ENCODE measurements at regions of chr7 and their contacts with region 1.

Region 1: GRCh38 chr7:116953727-116954442 is 584 bp downstream of the ST7 start:
- DNase-seq: peak; percentile 61
- H3K4me3 ChIP-seq: peak overlapping the region; percentile 71 to 99 (median 95)
- H3K27ac ChIP-seq: peak overlapping the region; percentile 99 to 100 (median 100)
- H3K4me1 ChIP-seq: peaks cover 5 to 34% (median 22%) of the 10 kb centered on the region in 4 donors
- H3K27me3 ChIP-seq: no peaks in the 10 kb centered on the region
- CTCF ChIP-seq: no peak
- EP300 ChIP-seq: no peak
- POLR2A ChIP-seq: peak; percentile 48

Region 2: DNA sequence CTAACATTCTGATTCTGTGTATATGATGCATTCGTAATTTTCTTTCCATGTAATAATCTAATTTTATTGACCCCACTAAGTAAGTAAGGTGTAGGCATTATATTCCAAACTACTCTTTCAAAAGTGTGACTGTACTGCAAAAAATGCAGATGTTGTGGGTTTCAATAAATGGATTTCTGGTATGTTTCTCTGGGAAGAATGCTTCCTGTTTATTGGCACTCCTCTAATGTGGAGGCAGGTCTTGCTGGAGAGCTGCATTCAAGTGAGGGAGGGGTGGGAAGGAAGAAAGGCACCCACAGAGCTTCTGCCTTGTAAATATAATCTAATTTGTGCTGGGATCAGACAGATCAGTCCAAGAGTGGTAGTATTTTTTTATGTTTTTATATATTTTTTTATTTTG is 23.3 kb after region 1 on chr7:
- in situ Hi-C with region 1: no loop called
- intact Hi-C with region 1: no loop called
- DNase-seq: no peak
- H3K4me3 ChIP-seq: no peak overlapping the region
- H3K27ac ChIP-seq: no peak overlapping the region
- H3K4me1 ChIP-seq: peaks cover 0 to 5% (median 0%) of the 10 kb centered on the region in 4 donors
- H3K27me3 ChIP-seq: no peaks in the 10 kb centered on the region
- CTCF ChIP-seq: no peak
- EP300 ChIP-seq: no peak
- POLR2A ChIP-seq: no peak

Region 3: GRCh38 chr7:118183786-118184564 is 1230.1 kb after region 1 on chr7 and contains the start of gene LSM8:
- in situ Hi-C with region 1: loop called in 1 of 4 experiments (anchors 25 kb)
- intact Hi-C with region 1: no loop called
- DNase-seq: peak; percentile 98
- H3K4me3 ChIP-seq: peak within 1 kb of the TSS; percentile 66 to 96 (median 80)
- H3K27ac ChIP-seq: peak within 1 kb of the TSS; percentile 91 to 96 (median 94)
- H3K4me1 ChIP-seq: peaks cover 9 to 35% (median 18%) of the 10 kb centered on the region in 4 donors
- H3K27me3 ChIP-seq: no peaks in the 10 kb centered on the region
- CTCF ChIP-seq: no peak
- EP300 ChIP-seq: no peak
- POLR2A ChIP-seq: peak; percentile 98
- total RNA-seq, gene LSM8: 6.4 to 43.8 (median 19.3) TPM

Measured in transverse colon (tissue), 4 donors.